Activated CD8-positive, alpha-beta memory T cell treated with anti-CD3 and anti-CD28 coated beads, Interleukin-2, amount 10 ng/mL, durations not matched to agents 7 days and 5 days (primary cell): ENCODE measurements at regions of chr10 and their contacts with region 1.

Region 1: GRCh38 chr10:79292891-79293746 is 54.1 kb upstream of the PPIF start:
- DNase-seq: peak; percentile 55
- ATAC-seq: peak; percentile 63
- H3K4me3 Mint-ChIP-seq: no peak overlapping the region
- H3K27ac Mint-ChIP-seq: peak overlapping the region; percentile 20
- H3K4me1 Mint-ChIP-seq: peaks cover 47% of the 10 kb centered on the region
- H3K27me3 Mint-ChIP-seq: no peaks in the 10 kb centered on the region

Region 2: GRCh38 chr10:79322616-79323543 is 29.8 kb after region 1 on chr10:
- CTCF ChIA-PET with region 1: interaction called, 42 read pairs
- DNase-seq: peak; percentile 91
- ATAC-seq: peak; percentile 81
- H3K4me3 Mint-ChIP-seq: peak overlapping the region; percentile 59
- H3K27ac Mint-ChIP-seq: peak overlapping the region; percentile 97
- H3K4me1 Mint-ChIP-seq: peaks cover 72% of the 10 kb centered on the region
- H3K27me3 Mint-ChIP-seq: no peaks in the 10 kb centered on the region